Gastrocnemius medialis (tissue), 4 donors: ENCODE measurements at regions of chr5 and their contacts with region 1.

Region 1: DNA sequence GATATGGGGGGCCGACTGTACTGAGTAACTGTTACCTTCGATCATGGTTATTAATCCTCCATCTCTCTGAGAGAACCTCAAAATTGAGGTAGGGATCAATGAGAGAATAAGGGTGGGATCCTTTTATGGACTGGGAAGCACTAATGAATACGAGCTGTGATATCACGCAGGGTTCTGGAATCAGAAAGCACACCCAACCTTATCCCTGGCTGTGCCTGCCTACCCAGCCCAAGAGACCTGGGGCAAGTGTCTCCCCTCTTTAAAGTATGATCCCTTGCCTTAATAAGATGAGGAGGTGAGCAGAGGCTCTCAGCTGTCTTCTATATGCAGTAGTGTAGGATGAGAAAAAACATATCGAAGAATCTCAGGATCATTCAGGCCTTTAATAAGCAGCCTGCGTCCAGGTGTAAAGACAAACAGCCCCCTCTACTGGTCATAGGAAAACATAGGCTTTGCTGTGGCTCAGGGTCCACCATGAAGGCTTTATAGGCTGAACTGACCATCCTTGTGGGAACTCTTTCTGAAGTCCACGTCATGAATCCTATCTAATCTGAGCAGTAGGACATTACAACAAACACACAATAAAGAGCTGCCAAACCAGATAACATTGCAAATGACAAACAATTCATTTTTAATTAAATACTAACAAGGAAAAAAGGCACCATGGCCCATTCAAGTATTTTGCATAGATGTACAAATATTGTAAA is 16.8 kb downstream of the NIPAL4 start:
- DNase-seq: no peak
- ATAC-seq: peak; percentile 80 to 87
- H3K4me3 ChIP-seq: no peak overlapping the region
- H3K27ac ChIP-seq: no peak overlapping the region
- H3K4me1 ChIP-seq: peaks cover 0 to 12% of the 10 kb centered on the region in 2 donors
- H3K27me3 ChIP-seq: no peaks in the 10 kb centered on the region
- CTCF ChIP-seq: peak; percentile 60 to 73 (median 68)
- POLR2A ChIP-seq: no peak

Region 2: GRCh38 chr5:157219491-157220271 is 257.2 kb before region 1 on chr5:
- in situ Hi-C with region 1: no loop called
- intact Hi-C with region 1: no loop called
- DNase-seq: no peak
- ATAC-seq: no peak
- H3K4me3 ChIP-seq: no peak overlapping the region
- H3K27ac ChIP-seq: no peak overlapping the region
- H3K4me1 ChIP-seq: no peaks in the 10 kb centered on the region
- H3K27me3 ChIP-seq: no peaks in the 10 kb centered on the region
- CTCF ChIP-seq: no peak
- POLR2A ChIP-seq: no peak

Region 3: DNA sequence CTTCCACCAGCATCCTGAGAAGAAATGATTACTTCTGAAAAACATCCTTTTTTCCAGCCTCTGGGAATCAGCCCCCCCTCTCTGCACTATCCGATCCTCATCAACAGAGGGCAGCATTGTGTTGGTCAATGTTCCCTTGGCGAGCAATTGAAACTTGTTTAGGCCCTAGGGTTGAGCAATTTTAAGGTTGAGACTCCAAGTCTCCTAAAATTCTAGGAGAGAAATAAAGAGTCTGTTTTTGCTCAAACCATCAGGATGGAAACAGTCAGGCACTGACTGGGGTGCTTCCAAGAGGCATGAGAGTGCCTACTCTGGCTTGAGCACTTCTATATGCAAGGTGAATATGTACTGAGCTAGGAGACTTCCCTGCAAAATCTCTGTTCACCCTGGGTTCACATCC is 223.3 kb before region 1 on chr5:
- in situ Hi-C with region 1: loop called in 1 of 4 experiments (anchors 10 kb)
- intact Hi-C with region 1: no loop called
- DNase-seq: peak in 1 of 2 donors; percentile 12
- ATAC-seq: peak; percentile 82 to 88
- H3K4me3 ChIP-seq: no peak overlapping the region
- H3K27ac ChIP-seq: no peak overlapping the region
- H3K4me1 ChIP-seq: no peaks in the 10 kb centered on the region
- H3K27me3 ChIP-seq: no peaks in the 10 kb centered on the region
- CTCF ChIP-seq: peak; percentile 32 to 75 (median 69)
- POLR2A ChIP-seq: no peak

Region 4: GRCh38 chr5:157283434-157283833 is 193.4 kb before region 1 on chr5:
- in situ Hi-C with region 1: no loop called
- intact Hi-C with region 1: no loop called
- DNase-seq: no peak
- ATAC-seq: no peak
- H3K4me3 ChIP-seq: no peak overlapping the region
- H3K27ac ChIP-seq: peak overlapping the region in 1 of 4 donors; percentile 45
- H3K4me1 ChIP-seq: peaks cover 16 to 26% of the 10 kb centered on the region in 2 donors
- H3K27me3 ChIP-seq: no peaks in the 10 kb centered on the region
- CTCF ChIP-seq: no peak
- POLR2A ChIP-seq: no peak

Region 5: DNA sequence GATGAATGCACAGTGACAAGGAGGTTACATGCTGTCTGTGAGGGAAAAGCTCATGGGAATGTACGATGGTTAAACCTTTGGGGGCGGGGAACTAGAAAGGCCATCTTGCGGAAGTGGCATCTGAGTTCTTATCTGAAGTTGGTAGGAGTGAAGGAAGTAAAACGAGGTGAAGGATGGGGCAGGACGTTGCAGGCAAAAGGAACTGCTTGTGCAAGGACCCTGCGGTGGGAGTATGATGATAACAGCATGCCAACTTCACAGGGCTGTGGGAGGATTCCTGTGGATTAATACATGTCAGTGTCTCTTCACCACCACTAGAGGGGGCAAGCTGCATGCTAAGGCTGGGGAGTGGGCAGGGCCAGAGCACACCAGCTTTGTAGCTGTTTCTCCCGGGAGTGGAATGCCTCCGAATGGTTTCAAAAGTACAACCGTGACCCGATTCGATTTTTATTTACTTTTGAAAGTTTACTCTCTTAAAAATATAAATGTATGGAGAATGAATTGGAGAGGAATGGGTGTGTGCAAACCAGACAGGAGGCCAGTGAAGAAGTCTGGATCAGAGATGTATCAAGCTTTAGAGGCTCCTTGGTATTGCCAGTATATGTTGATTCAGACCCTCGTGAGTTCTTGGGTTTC is 148.5 kb before region 1 on chr5:
- in situ Hi-C with region 1: loop called (anchors 5 to 10 kb)
- intact Hi-C with region 1: loop called (anchors 2 kb)
- DNase-seq: peak; percentile 47 to 48
- ATAC-seq: peak; percentile 90 to 98
- H3K4me3 ChIP-seq: peak overlapping the region in 1 of 4 donors; percentile 7
- H3K27ac ChIP-seq: no peak overlapping the region
- H3K4me1 ChIP-seq: no peaks in the 10 kb centered on the region
- H3K27me3 ChIP-seq: no peaks in the 10 kb centered on the region
- CTCF ChIP-seq: peak; percentile 73 to 92 (median 79)
- POLR2A ChIP-seq: no peak

Region 6: DNA sequence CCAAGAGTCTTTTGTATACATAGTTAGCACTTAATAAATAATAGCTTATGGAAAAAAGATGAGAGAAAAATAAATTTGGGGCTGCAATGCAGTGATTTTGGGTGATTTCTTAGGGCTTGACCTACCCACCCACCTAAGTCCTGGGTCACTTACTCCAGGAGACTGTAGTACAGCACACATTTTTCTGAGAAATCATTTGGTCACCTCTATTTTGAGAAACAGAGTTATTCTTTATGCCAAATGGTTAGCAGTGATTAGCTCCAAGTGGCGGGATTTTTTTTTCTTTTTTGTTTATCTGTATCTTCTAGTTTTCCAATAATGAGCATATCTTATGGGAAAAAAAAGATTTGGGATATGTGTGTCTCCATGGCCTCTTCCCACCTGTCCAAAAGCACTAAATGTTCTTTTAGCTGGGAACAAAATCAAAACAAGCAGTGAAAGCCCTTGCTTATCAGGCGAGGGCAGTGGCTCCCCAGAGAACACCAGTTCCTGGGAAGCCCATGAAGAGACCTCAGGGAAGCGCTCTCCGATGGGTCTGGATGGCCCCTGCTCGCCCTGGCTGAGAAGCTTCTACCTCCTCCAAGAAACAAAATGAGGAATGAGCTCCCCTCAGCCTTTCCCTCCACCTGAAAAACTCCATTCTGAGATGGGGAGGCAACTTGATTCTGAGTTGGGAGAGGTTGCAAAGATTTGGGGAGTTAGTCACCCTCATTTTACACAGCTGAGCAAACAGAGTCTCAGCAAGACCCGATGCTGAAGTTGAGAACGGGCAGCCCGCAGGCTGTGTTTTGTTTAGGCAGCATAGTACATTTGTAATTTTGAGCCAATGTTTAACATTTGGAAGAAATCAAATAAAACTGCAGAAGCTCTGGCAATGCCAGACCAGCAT is 141.1 kb before region 1 on chr5:
- in situ Hi-C with region 1: loop called in 1 of 4 experiments (anchors 10 kb)
- intact Hi-C with region 1: no loop called
- DNase-seq: no peak
- ATAC-seq: peak; percentile 62 to 63
- H3K4me3 ChIP-seq: no peak overlapping the region
- H3K27ac ChIP-seq: peak overlapping the region in 2 of 4 donors; percentile 10 to 31
- H3K4me1 ChIP-seq: no peaks in the 10 kb centered on the region
- H3K27me3 ChIP-seq: no peaks in the 10 kb centered on the region
- CTCF ChIP-seq: no peak
- POLR2A ChIP-seq: no peak

Region 7: DNA sequence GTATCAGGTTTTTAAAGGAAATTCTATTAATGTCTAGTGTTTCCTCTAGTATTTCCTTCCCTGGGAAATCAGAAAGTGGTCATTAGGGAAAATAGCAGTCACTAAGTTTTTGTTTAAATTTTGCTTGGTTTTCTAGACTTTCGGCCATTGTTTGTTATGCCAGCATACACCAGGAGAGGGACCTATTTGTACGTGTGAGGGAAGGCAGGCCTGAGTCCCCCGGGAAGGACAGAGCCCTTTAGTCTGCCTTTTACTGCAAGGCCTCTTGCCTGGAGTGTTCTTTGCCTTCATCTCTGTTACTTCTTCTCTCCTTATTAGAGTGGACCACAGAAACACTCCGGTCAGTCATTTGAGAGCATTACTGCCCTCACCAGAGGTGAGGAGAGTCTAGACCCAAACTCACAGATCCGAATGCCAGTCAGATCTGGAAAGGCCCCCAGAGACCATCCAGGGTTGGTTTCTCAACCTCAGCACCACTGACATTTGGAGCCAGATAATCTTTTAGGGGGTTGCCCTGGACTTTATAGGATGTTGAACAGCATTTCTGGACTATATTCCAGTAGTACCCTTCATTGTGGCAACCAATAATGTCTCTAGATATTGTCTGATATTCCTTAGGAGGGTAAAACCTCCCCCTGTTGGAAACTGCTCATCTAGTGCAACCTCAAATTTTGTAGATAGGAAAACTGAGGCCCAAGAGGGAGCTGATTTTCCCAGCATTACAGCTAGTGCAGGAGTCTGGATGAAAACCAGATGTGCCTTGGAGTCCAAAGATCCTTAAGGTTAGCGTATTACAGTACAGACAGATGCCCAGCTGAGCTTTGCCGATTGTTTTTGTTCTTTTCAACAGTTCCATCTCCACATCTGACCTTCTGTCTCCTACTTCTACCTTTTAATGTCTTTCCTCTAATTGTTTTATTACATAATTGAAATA is 109.8 kb before region 1 on chr5:
- in situ Hi-C with region 1: no loop called
- intact Hi-C with region 1: loop called (anchors 5 kb)
- DNase-seq: peak in 1 of 2 donors; percentile 23
- ATAC-seq: peak; percentile 51 to 52
- H3K4me3 ChIP-seq: no peak overlapping the region
- H3K27ac ChIP-seq: no peak overlapping the region
- H3K4me1 ChIP-seq: peaks cover under 1 to 17% of the 10 kb centered on the region in 2 donors
- H3K27me3 ChIP-seq: no peaks in the 10 kb centered on the region
- CTCF ChIP-seq: peak in 3 of 5 experiments; percentile 12 to 41 (median 37)
- POLR2A ChIP-seq: no peak

Region 8: DNA sequence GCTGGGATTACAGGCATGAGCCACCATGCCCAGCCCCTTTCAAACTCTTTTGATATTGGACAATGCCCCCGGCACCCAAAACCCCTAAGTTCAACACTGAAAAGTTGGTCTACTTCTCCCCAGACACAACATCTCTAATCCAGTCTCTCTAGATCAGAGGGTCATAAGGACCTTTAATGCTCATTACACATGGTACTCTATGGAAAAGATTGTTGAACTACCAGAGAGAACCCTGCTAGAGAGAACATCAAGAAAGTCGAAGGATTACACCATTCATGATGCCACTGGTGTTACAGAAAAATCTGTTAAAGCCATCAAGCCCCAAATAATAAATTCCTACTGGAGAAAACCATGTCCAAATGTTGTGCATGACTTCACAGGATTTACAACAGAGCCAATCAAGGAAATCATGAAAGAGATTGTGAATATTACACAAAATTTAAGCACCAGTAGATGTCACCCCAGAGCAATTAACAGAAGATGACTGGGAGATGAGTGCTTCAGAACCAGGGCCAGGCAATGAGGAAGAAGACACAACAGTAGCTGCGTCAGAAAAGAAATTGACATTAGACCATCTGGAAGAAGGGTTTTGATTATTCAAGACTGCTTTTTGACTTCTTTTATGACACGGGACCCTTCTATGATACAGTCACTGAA is 45.2 kb before region 1 on chr5:
- in situ Hi-C with region 1: loop called in 1 of 4 experiments (anchors 5 kb)
- intact Hi-C with region 1: loop called (anchors 1 kb)
- DNase-seq: peak in 1 of 2 donors; percentile 11
- ATAC-seq: peak; percentile 73 to 92
- H3K4me3 ChIP-seq: no peak overlapping the region
- H3K27ac ChIP-seq: no peak overlapping the region
- H3K4me1 ChIP-seq: no peaks in the 10 kb centered on the region
- H3K27me3 ChIP-seq: no peaks in the 10 kb centered on the region
- CTCF ChIP-seq: peak; percentile 32 to 50 (median 43)
- POLR2A ChIP-seq: no peak

Region 9: DNA sequence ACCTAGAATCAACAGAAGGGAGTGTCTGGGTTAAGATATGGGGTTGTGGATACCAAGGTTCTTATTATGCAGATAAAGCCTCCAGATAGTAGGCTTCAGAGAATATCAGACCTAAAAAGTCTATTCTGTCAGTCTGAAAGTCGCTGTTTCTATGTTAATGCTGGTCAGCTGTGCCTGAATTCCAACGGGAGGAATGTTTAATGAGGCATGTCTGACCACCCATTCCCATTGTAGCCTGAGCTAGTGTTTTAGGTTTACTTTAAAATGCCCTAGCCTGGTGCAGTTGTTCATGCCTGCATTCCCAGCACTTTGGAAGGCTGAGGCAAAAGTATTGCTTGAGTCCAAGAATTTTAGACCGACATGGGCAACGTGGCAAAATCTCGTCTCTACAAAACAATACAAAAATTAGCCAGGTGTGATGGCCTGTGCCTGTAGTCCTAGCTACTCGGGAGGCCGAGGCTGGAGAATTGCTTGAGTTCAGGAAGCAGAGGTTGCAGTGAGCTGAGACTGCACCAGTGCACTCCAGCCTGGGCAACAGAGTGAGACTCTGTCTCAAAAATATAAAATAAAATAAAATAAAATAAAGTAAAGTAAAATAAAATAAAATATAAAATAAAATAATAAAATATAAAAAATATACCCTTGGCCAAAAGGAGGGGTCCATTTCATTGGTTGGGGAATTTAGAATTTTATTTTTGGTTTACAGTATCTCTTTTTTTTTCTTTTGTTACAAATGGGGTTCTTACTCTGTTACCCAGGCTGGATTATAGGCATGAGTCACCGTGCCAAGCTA is 183.2 kb after region 1 on chr5:
- in situ Hi-C with region 1: no loop called
- intact Hi-C with region 1: no loop called
- DNase-seq: no peak
- ATAC-seq: no peak
- H3K4me3 ChIP-seq: no peak overlapping the region
- H3K27ac ChIP-seq: no peak overlapping the region
- H3K4me1 ChIP-seq: no peaks in the 10 kb centered on the region
- H3K27me3 ChIP-seq: no peaks in the 10 kb centered on the region
- CTCF ChIP-seq: no peak
- POLR2A ChIP-seq: no peak